ENCODE measurements at regions of chr17 and their contacts with region 1.

Region 1: GRCh38 chr17:39001703-39002637 is 34.8 kb upstream of the FBXO47 start:
- DNase-seq: peak; percentile 88
- H3K4me3 ChIP-seq: no peak overlapping the region
- H3K27ac ChIP-seq: peak overlapping the region; percentile 9
- H3K4me1 ChIP-seq: peaks cover 20% of the 10 kb centered on the region
- H3K27me3 ChIP-seq: no peaks in the 10 kb centered on the region
- CTCF ChIP-seq: no peak

Region 2: DNA sequence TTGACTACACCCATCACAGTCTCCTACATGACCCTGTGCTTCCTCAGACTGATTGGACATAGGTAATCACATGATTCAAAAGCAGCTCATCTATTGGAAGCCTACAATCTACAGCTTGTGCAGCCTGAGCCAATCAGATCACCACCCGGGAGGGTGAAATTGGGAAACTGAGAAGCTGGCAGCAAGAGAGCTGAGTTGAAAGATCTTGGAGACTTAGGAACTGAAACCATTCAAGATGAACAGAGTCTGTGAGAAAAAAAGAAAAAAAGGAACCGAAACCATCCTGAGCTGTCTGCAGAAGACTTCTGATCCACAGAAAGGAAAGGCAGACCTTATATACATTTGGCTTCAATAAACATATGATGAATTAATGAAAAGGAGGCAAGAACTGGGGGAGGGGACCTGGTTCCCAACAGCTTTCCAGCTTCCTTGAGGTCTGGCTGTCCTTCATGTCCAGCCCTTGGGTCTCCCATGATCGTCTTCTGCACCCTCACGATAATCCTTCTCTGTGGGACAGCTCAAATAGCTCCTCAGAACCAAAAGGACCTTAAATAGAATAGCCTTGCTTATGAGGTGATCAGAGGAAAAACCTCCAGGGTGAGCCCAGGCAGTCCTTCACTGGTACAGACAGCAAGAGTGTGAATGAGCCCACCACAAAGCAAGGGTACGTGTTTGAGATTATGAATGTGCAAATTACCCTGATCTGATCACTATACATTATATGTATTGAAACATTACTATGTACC is 116.9 kb after region 1 on chr17:
- CTCF ChIA-PET with region 1: no interaction called
- dilution Hi-C with region 1: no loop called
- in situ Hi-C with region 1: loop called in 1 of 2 experiments (anchors 25 kb)
- intact Hi-C with region 1: no loop called
- DNase-seq: no peak
- H3K4me3 ChIP-seq: no peak overlapping the region
- H3K27ac ChIP-seq: no peak overlapping the region
- H3K4me1 ChIP-seq: no peaks in the 10 kb centered on the region
- H3K27me3 ChIP-seq: no peaks in the 10 kb centered on the region
- CTCF ChIP-seq: no peak